GM12878 (cell line): ENCODE measurements at regions of chr13 and their contacts with region 1.

Region 1: GRCh38 chr13:58480061-58480460 is 848.5 kb downstream of the PCDH17 start:
- DNase-seq: no peak
- ATAC-seq: no peak
- H3K4me3 ChIP-seq: no peak overlapping the region
- H3K27ac ChIP-seq: no peak overlapping the region
- H3K4me1 ChIP-seq: no peaks in the 10 kb centered on the region
- H3K27me3 ChIP-seq: no peaks in the 10 kb centered on the region
- CTCF ChIP-seq: no peak
- EP300 ChIP-seq: no peak
- POLR2A ChIP-seq: no peak
- RAD21 ChIP-seq: no peak

Region 2: DNA sequence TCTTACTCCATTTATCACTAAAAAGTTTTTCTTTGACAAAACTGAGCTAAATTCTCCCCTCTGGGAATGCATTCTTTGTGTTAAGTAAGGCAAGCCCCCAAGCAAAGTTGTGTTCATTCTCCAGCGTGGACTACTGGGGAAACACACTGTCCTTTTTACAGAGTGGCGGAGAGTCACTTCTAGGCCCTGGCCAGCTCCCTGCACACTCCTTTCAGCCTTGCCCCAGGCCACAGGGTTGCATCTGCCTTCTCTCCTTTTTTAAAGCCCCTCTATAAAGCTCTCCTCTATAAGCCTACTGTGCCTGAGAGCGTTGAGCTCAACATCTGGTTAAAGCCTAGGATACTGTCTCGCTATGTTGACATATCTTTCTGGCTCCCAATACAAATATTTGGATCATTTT is 45.1 kb before region 1 on chr13:
- CTCF ChIA-PET with region 1: no interaction called
- POLR2A ChIA-PET with region 1: no interaction called
- RAD21 ChIA-PET with region 1: no interaction called
- SMC1A ChIA-PET with region 1: no interaction called
- in situ Hi-C with region 1: no loop called
- intact Hi-C with region 1: no loop called
- DNase-seq: no peak
- ATAC-seq: no peak
- H3K4me3 ChIP-seq: no peak overlapping the region
- H3K27ac ChIP-seq: no peak overlapping the region
- H3K4me1 ChIP-seq: no peaks in the 10 kb centered on the region
- H3K27me3 ChIP-seq: no peaks in the 10 kb centered on the region
- CTCF ChIP-seq: no peak
- EP300 ChIP-seq: no peak
- POLR2A ChIP-seq: no peak
- RAD21 ChIP-seq: no peak

Region 3: GRCh38 chr13:58542530-58542929 is 62.5 kb after region 1 on chr13:
- CTCF ChIA-PET with region 1: no interaction called
- POLR2A ChIA-PET with region 1: no interaction called
- RAD21 ChIA-PET with region 1: no interaction called
- SMC1A ChIA-PET with region 1: no interaction called
- in situ Hi-C with region 1: loop called (anchors 10 kb)
- intact Hi-C with region 1: no loop called
- DNase-seq: no peak
- ATAC-seq: peak; percentile 78
- H3K4me3 ChIP-seq: no peak overlapping the region
- H3K27ac ChIP-seq: no peak overlapping the region
- H3K4me1 ChIP-seq: no peaks in the 10 kb centered on the region
- H3K27me3 ChIP-seq: no peaks in the 10 kb centered on the region
- CTCF ChIP-seq: no peak
- EP300 ChIP-seq: no peak
- POLR2A ChIP-seq: no peak
- RAD21 ChIP-seq: no peak